Caco-2 (cell line): ENCODE measurements at regions of chr14 and their contacts with region 1.

Region 1: DNA sequence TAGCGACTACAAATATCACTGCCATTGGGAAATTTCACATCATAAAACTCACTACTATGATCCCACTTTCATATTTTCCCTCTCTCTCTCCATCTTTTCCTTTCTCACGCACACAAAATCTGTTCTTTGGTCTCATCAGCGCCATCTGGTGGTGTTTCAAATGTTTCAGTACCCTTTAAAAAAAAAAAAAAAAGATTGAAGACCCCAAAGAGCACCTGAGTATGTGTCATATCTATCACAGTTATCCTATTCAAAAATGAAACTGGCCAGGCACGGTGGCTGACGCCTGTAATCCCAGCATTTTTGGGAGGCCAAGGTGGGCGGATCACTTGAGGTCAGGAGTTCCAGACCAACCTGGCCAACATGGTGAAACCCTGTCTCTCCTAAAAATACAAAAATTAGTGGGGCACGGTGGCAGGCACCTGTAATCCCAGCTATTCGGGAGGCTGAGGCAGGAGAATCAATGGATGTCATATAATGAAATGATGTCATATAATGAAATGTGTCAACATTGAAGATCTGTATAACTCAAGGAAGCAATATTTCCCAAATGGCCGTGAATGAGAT is 72.4 kb downstream of the TTC9 start:
- DNase-seq: peak in 1 of 2 experiments; percentile 59
- H3K4me3 ChIP-seq: no peak overlapping the region
- H3K4me3 Mint-ChIP-seq: no peak overlapping the region
- H3K27ac Mint-ChIP-seq: no peak overlapping the region
- H3K4me1 ChIP-seq: peaks cover 47% of the 10 kb centered on the region
- H3K4me1 Mint-ChIP-seq: peaks cover 34% of the 10 kb centered on the region
- H3K27me3 ChIP-seq: no peaks in the 10 kb centered on the region
- H3K27me3 Mint-ChIP-seq: no peaks in the 10 kb centered on the region
- CTCF ChIP-seq: peak in 1 of 2 experiments; percentile 48

Region 2: GRCh38 chr14:70600382-70601157 is 113.6 kb before region 1 on chr14 and contains the start of gene MED6:
- CTCF ChIA-PET with region 1: no interaction called
- POLR2A ChIA-PET with region 1: no interaction called
- intact Hi-C with region 1: loop called (anchors 5 kb)
- DNase-seq: peak; percentile 89 to 93
- H3K4me3 ChIP-seq: peak within 1 kb of the TSS; percentile 98
- H3K4me3 Mint-ChIP-seq: peak within 1 kb of the TSS; percentile 93
- H3K27ac Mint-ChIP-seq: peak within 1 kb of the TSS; percentile 92
- H3K4me1 ChIP-seq: no peaks in the 10 kb centered on the region
- H3K4me1 Mint-ChIP-seq: peaks cover 8% of the 10 kb centered on the region
- H3K27me3 ChIP-seq: no peaks in the 10 kb centered on the region
- H3K27me3 Mint-ChIP-seq: no peaks in the 10 kb centered on the region
- CTCF ChIP-seq: no peak
- total RNA-seq, gene MED6: 48.0 and 55.5 TPM in 2 replicates

Region 3: DNA sequence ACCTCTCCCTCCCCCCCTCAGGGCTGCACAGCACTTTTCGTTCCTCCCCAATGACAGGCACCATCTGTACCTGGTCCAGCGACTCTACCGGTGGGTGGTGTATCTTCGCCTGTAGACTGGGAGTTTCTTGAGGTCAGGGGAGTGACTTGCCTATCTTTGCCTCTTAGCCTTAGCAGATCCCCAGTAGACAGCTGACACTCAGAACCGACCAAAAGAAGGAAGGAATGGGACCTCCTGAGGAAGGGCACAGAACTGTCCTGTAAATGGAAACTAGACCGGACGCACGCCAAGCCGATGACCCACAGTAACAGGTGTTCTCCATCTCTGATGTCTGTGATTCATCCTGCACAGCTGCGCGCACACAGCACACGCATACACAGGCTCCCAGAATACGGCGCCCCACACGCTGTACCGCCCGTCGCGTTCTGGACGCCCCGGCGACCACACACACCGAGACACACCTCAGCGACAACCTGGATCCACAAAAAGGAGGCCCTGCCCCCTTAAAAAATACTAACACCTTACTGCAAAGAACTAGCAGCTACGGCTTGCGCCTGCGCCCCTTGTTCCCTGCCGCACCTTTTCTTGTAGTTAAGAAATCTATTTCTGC is 73.1 kb before region 1 on chr14:
- CTCF ChIA-PET with region 1: interaction called, 3 read pairs
- POLR2A ChIA-PET with region 1: no interaction called
- intact Hi-C with region 1: loop called (anchors 2 kb)
- DNase-seq: peak in 1 of 2 experiments; percentile 45
- H3K4me3 ChIP-seq: peak overlapping the region; percentile 84
- H3K4me3 Mint-ChIP-seq: peak overlapping the region; percentile 91
- H3K27ac Mint-ChIP-seq: peak overlapping the region; percentile 37
- H3K4me1 ChIP-seq: peaks cover 6% of the 10 kb centered on the region; the same call in 1 of the 2 replicates
- H3K4me1 Mint-ChIP-seq: peaks cover 13% of the 10 kb centered on the region
- H3K27me3 ChIP-seq: no peaks in the 10 kb centered on the region
- H3K27me3 Mint-ChIP-seq: peaks cover 4% of the 10 kb centered on the region
- CTCF ChIP-seq: no peak

Region 4: GRCh38 chr14:70753518-70753953 is 39.4 kb after region 1 on chr14:
- CTCF ChIA-PET with region 1: interaction called, 4 read pairs
- POLR2A ChIA-PET with region 1: no interaction called
- intact Hi-C with region 1: loop called (anchors 1 kb)
- DNase-seq: peak; percentile 91 to 94
- H3K4me3 ChIP-seq: no peak overlapping the region
- H3K4me3 Mint-ChIP-seq: peak overlapping the region; percentile 53
- H3K27ac Mint-ChIP-seq: peak overlapping the region; percentile 84
- H3K4me1 ChIP-seq: peaks cover 41% of the 10 kb centered on the region
- H3K4me1 Mint-ChIP-seq: peaks cover 26% of the 10 kb centered on the region
- H3K27me3 ChIP-seq: no peaks in the 10 kb centered on the region
- H3K27me3 Mint-ChIP-seq: no peaks in the 10 kb centered on the region
- CTCF ChIP-seq: no peak

Region 5: GRCh38 chr14:70955543-70956480 is 241.7 kb after region 1 on chr14:
- CTCF ChIA-PET with region 1: no interaction called
- POLR2A ChIA-PET with region 1: no interaction called
- intact Hi-C with region 1: loop called (anchors 10 kb)
- DNase-seq: peak in 1 of 2 experiments; percentile 39
- H3K4me3 ChIP-seq: no peak overlapping the region
- H3K4me3 Mint-ChIP-seq: no peak overlapping the region
- H3K27ac Mint-ChIP-seq: no peak overlapping the region
- H3K4me1 ChIP-seq: no peaks in the 10 kb centered on the region
- H3K4me1 Mint-ChIP-seq: no peaks in the 10 kb centered on the region
- H3K27me3 ChIP-seq: no peaks in the 10 kb centered on the region
- H3K27me3 Mint-ChIP-seq: no peaks in the 10 kb centered on the region
- CTCF ChIP-seq: peak; percentile 40 to 65